OCI-LY7 (cell line): ENCODE measurements at regions of chr9 and their contacts with region 1.

Region 1: DNA sequence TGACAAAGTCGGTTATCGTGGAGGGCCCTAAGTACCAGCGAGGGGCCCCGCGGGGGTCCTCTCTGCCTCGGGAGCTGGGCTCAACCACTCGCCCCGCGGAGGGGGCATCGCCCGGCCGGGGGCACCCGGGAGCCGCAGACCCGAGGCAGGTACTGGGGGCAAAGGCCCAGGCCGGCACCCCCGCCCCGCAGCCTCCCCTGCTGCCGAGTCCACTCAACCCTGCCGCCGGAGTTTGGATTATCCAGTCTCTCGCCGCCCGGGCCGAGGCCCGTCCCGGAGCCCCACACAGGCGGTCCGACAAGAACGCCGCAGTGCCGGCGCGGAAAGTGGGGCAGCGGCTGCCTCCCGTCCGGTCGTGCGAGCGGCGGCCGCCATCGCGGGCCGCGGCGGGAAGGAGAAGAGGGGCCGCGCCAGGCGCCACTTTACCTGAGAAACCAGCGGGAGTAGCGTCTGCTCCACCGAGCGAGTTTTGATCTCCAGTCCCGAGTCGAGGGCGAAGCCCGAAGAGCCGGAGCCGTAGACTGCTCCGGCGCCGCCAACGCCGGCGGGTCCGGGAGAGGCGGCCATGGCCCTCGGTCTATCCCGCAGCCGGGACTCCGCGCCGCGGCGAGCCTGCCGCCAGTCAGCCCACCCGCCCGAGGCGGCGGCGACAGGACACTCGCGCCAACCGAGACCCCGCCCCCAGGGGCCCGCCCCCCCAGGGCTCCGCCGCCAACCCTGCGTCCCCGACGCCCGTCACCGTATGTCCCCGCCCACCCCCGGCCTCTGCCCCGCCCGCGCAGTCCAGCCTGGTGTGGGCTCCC is at the start of gene CTNNAL1:
- DNase-seq: peak; percentile 91
- H3K4me3 ChIP-seq: peak within 1 kb of the TSS; percentile 99
- H3K27ac ChIP-seq: peak within 1 kb of the TSS; percentile 38
- H3K4me1 ChIP-seq: peaks cover 32% of the 10 kb centered on the region
- CTCF ChIP-seq: no peak
- total RNA-seq, gene CTNNAL1: 31.2 and 32.0 TPM in 2 replicates

Region 2: GRCh38 chr9:108850293-108850897 is 162.7 kb before region 1 on chr9:
- CTCF ChIA-PET with region 1: no interaction called
- POLR2A ChIA-PET with region 1: no interaction called
- intact Hi-C with region 1: no loop called
- DNase-seq: peak; percentile 12
- H3K4me3 ChIP-seq: no peak overlapping the region
- H3K27ac ChIP-seq: no peak overlapping the region
- H3K4me1 ChIP-seq: no peaks in the 10 kb centered on the region
- CTCF ChIP-seq: peak; percentile 64

Region 3: DNA sequence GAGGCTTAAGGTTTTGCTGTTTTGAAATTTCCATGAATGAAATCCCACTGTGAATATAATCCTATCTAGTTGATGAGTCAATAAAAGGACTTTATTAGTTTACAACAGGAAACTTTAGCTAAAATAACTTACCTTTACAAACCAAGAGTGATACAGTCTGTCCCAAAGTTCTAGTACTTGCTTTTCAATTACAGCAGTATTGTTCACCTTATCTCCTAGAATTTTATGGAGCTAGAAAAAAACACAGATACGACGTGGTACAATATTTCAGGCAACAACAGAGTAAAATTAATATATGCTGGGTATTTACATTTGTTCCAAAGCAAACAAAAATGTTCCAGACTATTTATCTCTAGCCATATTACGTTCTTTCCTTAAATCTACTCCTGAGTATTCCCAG is 47.1 kb after region 1 on chr9:
- CTCF ChIA-PET with region 1: no interaction called
- POLR2A ChIA-PET with region 1: interaction called, 3 read pairs
- intact Hi-C with region 1: loop called (anchors 1 kb)
- DNase-seq: no peak
- H3K4me3 ChIP-seq: no peak overlapping the region
- H3K27ac ChIP-seq: no peak overlapping the region
- H3K4me1 ChIP-seq: no peaks in the 10 kb centered on the region
- CTCF ChIP-seq: no peak